WTC11 (cell line): ENCODE measurements at regions of chr1 and their contacts with region 1.

Region 1: DNA sequence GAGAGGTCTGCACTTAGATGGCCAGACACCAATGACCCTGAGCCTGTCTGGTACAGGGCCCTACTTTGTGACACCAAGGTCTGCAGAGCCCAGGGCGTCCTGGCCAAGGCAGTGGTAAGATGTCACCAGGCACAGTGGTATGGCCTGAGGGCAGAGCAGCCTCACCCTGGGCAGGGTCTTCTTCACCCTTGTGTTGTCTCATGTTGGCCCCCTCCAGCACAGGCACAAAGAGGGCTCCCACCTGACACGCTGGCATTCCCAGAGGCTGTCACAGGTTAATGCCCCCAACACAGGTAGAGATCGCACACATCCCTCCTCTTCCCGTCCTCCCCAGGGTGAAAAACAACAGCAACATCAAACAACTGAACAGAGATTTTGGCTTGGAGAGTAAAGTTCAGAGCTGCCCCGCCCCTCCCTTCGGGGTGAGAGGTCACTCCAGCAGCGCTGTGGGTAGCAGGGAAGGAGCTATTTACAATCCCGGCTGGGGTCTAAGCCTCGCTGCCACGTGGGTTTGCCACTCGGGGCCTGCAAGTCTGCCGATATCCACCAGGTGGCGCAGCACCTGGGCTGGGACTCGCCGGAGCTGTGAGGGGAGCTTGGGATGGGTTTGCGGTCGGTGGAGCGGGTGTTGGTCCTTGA is 12.6 kb downstream of the EFNA3 start:
- DNase-seq: peak; percentile 94
- ATAC-seq: peak; percentile 80
- H3K4me3 Mint-ChIP-seq: peak overlapping the region; percentile 32
- H3K27ac Mint-ChIP-seq: no peak overlapping the region
- H3K4me1 Mint-ChIP-seq: peaks cover 30% of the 10 kb centered on the region
- H3K27me3 Mint-ChIP-seq: peaks cover 12% of the 10 kb centered on the region
- CTCF ChIP-seq: peak; percentile 99

Region 2: GRCh38 chr1:154862907-154863306 is 228.3 kb before region 1 on chr1:
- CTCF ChIA-PET with region 1: no interaction called
- POLR2A ChIA-PET with region 1: no interaction called
- DNase-seq: no peak
- ATAC-seq: peak; percentile 22
- H3K4me3 Mint-ChIP-seq: peak overlapping the region; percentile 9; the same call in 1 of the 2 replicates
- H3K27ac Mint-ChIP-seq: no peak overlapping the region
- H3K4me1 Mint-ChIP-seq: peaks cover 48% of the 10 kb centered on the region
- H3K27me3 Mint-ChIP-seq: peaks cover 8% of the 10 kb centered on the region
- CTCF ChIP-seq: no peak

Region 3: DNA sequence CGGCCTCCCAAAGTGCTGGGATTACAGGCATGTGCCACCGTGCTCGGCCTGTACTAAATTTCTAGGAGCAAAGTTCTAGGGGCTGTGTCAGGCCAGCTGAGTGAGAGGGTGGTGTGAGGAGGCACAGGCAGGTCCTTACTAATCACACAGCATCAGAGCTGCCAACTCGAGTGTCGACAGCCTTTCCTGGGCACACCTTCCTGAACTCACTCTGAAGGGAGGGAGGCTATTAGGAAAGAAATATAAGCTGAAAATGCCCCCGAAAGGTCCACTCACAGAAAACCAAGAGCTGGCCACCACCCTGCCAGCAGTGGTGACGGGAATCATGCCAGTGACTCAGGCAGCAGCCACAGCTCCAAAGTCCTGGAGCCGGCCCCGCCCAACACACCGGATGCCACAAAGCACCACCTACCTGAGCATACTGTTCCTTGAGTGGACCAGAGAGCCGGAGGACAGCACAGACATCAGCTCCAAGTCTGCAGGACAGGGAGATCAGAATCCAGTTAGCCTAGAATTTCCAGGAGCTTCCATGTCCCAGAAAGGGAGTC is 159.2 kb before region 1 on chr1:
- CTCF ChIA-PET with region 1: no interaction called
- POLR2A ChIA-PET with region 1: no interaction called
- DNase-seq: no peak
- ATAC-seq: no peak
- H3K4me3 Mint-ChIP-seq: no peak overlapping the region
- H3K27ac Mint-ChIP-seq: no peak overlapping the region
- H3K4me1 Mint-ChIP-seq: peaks cover 4% of the 10 kb centered on the region
- H3K27me3 Mint-ChIP-seq: peaks cover 3% of the 10 kb centered on the region; the same call in 1 of the 2 replicates
- CTCF ChIP-seq: no peak

Region 4: DNA sequence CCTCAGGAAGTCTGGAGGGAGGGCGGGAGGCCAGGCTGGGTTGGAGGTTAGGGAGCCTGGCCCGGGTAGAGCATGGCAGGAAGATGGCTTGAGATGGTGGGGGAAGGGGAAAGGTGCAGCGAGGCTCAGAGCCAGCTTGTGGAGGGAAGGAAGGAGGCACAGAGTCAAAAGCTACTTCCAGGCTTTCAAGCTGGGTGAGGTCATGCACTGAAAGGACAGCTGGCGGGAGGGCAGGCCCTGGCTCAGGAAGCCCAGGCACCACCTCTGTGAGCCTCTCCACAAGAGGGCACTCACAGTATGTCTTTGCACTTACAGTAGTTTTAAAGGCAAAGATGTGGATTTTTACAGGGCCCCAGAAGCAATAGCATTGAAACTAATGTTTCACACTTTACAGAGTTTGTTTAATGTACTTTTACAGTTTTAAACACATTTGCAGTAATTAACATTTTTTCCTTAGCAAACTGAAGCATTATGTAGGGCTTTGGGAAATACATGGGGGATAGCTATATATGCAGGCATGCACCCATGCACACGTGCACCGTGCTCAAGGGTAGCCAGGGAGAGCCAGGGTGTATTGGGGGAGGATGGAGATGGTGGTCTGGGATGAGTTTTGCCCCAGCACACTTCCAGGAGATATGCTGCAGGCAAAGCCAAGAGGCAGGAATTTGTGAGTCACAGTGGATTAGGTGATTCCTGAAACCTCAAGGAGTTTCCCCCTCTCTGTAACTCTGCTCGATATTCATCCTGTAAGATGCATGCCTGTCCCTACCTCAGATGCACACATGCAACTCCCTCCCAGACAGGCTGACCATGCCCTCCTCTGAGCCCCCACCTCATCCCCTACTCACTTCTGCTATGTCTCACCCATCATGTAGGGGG is 46.1 kb before region 1 on chr1:
- CTCF ChIA-PET with region 1: interaction called, 88 read pairs
- POLR2A ChIA-PET with region 1: no interaction called
- DNase-seq: peak; percentile 77
- ATAC-seq: peak; percentile 92
- H3K4me3 Mint-ChIP-seq: no peak overlapping the region
- H3K27ac Mint-ChIP-seq: no peak overlapping the region
- H3K4me1 Mint-ChIP-seq: peaks cover 35% of the 10 kb centered on the region
- H3K27me3 Mint-ChIP-seq: no peaks in the 10 kb centered on the region; the same call in none of the 2 replicates
- CTCF ChIP-seq: no peak; the same call in 1 of the 2 replicates

Region 5: GRCh38 chr1:155070721-155071569 is 20.2 kb before region 1 on chr1:
- CTCF ChIA-PET with region 1: interaction called, 62 read pairs
- POLR2A ChIA-PET with region 1: no interaction called
- DNase-seq: peak; percentile 94
- ATAC-seq: peak; percentile 78
- H3K4me3 Mint-ChIP-seq: peak overlapping the region; percentile 75
- H3K27ac Mint-ChIP-seq: no peak overlapping the region
- H3K4me1 Mint-ChIP-seq: peaks cover 41% of the 10 kb centered on the region
- H3K27me3 Mint-ChIP-seq: peaks cover 33% of the 10 kb centered on the region
- CTCF ChIP-seq: peak; percentile 52; the same call in 1 of the 2 replicates

Region 6: DNA sequence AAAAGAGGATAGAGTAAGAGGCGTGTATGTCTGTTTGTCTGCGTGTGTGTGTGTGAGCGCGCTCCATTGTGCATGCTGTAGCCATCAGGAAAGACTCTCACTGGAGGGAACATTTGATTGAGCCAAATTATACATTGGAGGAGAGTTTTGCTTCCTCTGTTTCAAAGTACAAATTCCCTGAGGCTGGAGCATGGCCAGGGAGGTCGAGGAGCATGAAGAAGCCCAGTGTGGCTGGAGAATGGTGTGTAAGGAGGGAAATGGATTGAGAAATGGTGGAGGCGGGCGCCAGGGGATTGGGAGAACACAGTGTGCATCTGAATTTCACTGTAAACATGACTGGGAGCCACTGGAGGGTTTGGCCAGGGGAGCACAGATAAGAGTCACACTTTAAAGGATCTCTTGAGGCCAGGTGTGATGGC is 14.4 kb after region 1 on chr1:
- CTCF ChIA-PET with region 1: interaction called, 17 read pairs
- POLR2A ChIA-PET with region 1: interaction called, 5 read pairs
- DNase-seq: no peak
- ATAC-seq: no peak
- H3K4me3 Mint-ChIP-seq: no peak overlapping the region
- H3K27ac Mint-ChIP-seq: peak overlapping the region; percentile 2; the same call in 1 of the 2 replicates
- H3K4me1 Mint-ChIP-seq: no peaks in the 10 kb centered on the region
- H3K27me3 Mint-ChIP-seq: peaks cover 14% of the 10 kb centered on the region
- CTCF ChIP-seq: no peak

Region 7: DNA sequence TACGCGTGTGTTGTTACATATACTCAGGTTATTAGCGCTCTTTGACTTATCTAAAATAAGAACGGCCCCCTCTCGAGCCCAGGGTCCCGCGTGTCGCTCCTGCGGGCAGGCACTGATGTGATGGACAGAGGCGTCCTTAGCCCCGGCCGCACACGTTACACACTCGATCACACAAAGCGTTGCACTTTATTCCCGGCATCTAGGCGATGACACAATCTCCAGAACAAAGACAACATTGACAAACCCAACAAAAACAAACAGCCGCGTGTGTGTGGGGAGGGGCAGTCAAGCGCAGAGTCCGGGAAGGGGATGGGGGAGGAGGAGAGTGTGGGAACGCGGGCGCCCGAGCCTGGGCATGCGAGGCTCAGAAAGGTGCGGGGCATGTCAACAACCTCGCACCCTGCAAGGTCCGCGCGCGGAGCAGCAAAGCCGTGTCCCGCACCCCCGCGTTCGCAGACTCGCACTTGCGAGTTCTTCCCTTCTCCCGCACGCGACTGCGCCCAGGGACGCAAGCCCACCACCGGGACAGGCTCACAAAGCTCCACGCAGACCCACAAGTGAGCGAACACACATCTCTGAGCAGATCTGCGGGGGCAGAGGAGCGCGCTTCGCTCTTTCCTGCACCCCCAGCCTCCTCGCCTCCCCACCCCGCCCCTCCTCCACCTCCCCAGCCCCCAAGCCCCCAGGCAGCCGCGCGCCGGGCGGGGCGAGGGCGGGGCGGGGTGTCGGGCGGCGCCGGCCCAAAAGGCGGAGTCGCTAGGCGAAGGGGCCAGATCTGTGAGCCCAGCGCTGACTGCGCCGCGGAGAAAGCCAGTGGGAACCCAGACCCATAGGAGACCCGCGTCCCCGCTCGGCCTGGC is 36.1 kb after region 1 on chr1 and contains the start of gene EFNA1:
- CTCF ChIA-PET with region 1: interaction called, 152 read pairs
- POLR2A ChIA-PET with region 1: interaction called, 9 read pairs
- DNase-seq: peak; percentile 61
- ATAC-seq: peak; percentile 24
- H3K4me3 Mint-ChIP-seq: peak within 1 kb of the TSS; percentile 90
- H3K27ac Mint-ChIP-seq: no peak within 1 kb of the TSS; the same call in 1 of the 2 replicates
- H3K4me1 Mint-ChIP-seq: peaks cover 55% of the 10 kb centered on the region
- H3K27me3 Mint-ChIP-seq: peaks cover 55% of the 10 kb centered on the region
- CTCF ChIP-seq: no peak
- total RNA-seq, gene EFNA1: 6.0 to 7.3 TPM (median 6.5 TPM) in 3 replicates

Region 8: GRCh38 chr1:155145491-155145890 is 54.3 kb after region 1 on chr1:
- CTCF ChIA-PET with region 1: interaction called, 22 read pairs
- POLR2A ChIA-PET with region 1: no interaction called
- DNase-seq: no peak
- ATAC-seq: no peak
- H3K4me3 Mint-ChIP-seq: no peak overlapping the region
- H3K27ac Mint-ChIP-seq: no peak overlapping the region
- H3K4me1 Mint-ChIP-seq: peaks cover 6% of the 10 kb centered on the region; the same call in 1 of the 2 replicates
- H3K27me3 Mint-ChIP-seq: peaks cover 36% of the 10 kb centered on the region
- CTCF ChIP-seq: no peak

Region 9: DNA sequence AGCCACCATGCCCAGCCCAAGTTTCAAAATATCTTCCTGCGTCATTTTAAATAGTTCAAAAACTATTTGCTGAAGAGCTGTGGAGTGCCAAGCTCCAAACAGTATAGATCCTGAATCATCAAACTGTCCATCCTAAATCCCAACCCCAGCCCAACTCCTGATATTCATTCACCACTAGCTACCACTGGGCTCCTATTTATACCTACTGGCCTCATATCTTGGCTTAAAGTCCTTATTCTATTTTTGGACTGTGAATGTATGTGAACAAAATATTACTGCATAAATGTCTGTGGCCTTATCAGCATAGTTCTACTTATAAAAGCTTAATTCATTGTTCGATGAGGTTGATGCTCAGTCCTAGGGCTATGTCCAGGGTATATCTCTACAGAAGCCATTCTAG is 176.2 kb after region 1 on chr1:
- CTCF ChIA-PET with region 1: no interaction called
- POLR2A ChIA-PET with region 1: no interaction called
- DNase-seq: no peak
- ATAC-seq: no peak
- H3K4me3 Mint-ChIP-seq: no peak overlapping the region
- H3K27ac Mint-ChIP-seq: no peak overlapping the region
- H3K4me1 Mint-ChIP-seq: peaks cover 14% of the 10 kb centered on the region
- H3K27me3 Mint-ChIP-seq: no peaks in the 10 kb centered on the region
- CTCF ChIP-seq: no peak